Heart right ventricle (tissue), 16 donors: ENCODE measurements at regions of chr6 and their contacts with region 1.

Region 1: GRCh38 chr6:125346201-125346925 is 44.6 kb upstream of the HDDC2 start:
- DNase-seq: peak in 1 of 2 donors; percentile 37
- ATAC-seq: peak; percentile 22 to 89 (median 76)
- H3K4me3 ChIP-seq: peak overlapping the region in 6 of 10 donors; percentile 4 to 31 (median 16)
- H3K27ac ChIP-seq: peak overlapping the region; percentile 22 to 77 (median 65)
- H3K4me1 ChIP-seq: peaks cover 0 to 14% (median 6%) of the 10 kb centered on the region in 9 donors
- H3K27me3 ChIP-seq: peaks cover 0 to 5% (median 0%) of the 10 kb centered on the region in 7 donors
- CTCF ChIP-seq: no peak

Region 2: GRCh38 chr6:125432982-125433381 is 86.6 kb after region 1 on chr6:
- intact Hi-C with region 1: loop called in 1 of 10 experiments (anchors 10 kb)
- DNase-seq: no peak
- ATAC-seq: no peak
- H3K4me3 ChIP-seq: no peak overlapping the region
- H3K27ac ChIP-seq: no peak overlapping the region
- H3K4me1 ChIP-seq: no peaks in the 10 kb centered on the region
- H3K27me3 ChIP-seq: peaks cover 0 to 3% (median 0%) of the 10 kb centered on the region in 7 donors
- CTCF ChIP-seq: no peak